ENCODE measurements at regions of chr5 and their contacts with region 1.

Region 1: GRCh38 chr5:53481887-53482716 is 1.7 kb downstream of the FST start:
- DNase-seq: peak; percentile 71
- ATAC-seq: peak; percentile 8
- H3K4me3 ChIP-seq: peak overlapping the region; percentile 100
- H3K27ac ChIP-seq: peak overlapping the region; percentile 99
- H3K4me1 ChIP-seq: peaks cover 15% of the 10 kb centered on the region
- H3K27me3 ChIP-seq: no peaks in the 10 kb centered on the region
- CTCF ChIP-seq: 0 out of 2 replicates have a peak, but pooled peaks have one; percentile 5
- POLR2A ChIP-seq: peak; percentile 69
- RAD21 ChIP-seq: peak; percentile 39; the same call in 1 of the 2 replicates

Region 2: GRCh38 chr5:52893105-52893504 is 589.0 kb before region 1 on chr5:
- CTCF ChIA-PET with region 1: no interaction called
- POLR2A ChIA-PET with region 1: no interaction called
- dilution Hi-C with region 1: no loop called
- in situ Hi-C with region 1: no loop called
- intact Hi-C with region 1: no loop called
- DNase-seq: peak; percentile 90
- ATAC-seq: peak; percentile 76
- H3K4me3 ChIP-seq: no peak overlapping the region
- H3K27ac ChIP-seq: no peak overlapping the region
- H3K4me1 ChIP-seq: peaks cover 9% of the 10 kb centered on the region
- H3K27me3 ChIP-seq: no peaks in the 10 kb centered on the region
- CTCF ChIP-seq: no peak
- POLR2A ChIP-seq: no peak
- RAD21 ChIP-seq: 0 out of 2 replicates have a peak, but pooled peaks have one; percentile 7

Region 3: DNA sequence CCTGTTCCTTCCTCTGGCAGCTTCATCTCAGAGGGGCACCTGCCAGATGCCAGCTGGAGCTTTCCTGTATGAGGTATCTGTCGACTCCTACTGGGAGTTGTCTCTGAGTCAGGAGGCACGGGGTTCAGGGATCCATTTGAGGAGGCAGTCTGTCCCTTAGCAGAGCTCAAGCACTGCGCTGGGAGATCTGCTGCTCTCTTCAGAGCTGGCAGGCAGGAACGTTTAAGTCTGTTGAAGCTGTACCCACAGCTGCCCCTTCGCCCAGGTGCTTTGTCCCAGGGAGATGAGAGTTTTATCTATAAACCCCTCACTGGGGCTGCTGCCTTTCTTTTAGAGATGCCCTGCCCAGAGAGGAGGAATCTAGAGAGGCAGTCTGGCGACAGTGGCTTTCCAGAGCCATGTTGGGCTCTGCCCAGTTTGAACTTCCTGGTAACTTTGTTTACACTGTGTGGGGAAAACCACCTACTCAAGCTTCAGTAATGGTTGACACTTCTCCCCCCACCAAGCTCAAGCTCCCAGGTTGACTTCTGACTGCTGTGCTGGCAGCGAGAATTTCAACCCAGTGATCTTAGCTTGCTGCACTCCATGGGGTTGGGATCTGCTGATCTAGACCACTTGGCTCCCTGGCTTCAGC is 504.7 kb before region 1 on chr5:
- CTCF ChIA-PET with region 1: no interaction called
- POLR2A ChIA-PET with region 1: no interaction called
- dilution Hi-C with region 1: no loop called
- in situ Hi-C with region 1: no loop called
- intact Hi-C with region 1: no loop called
- DNase-seq: no peak
- ATAC-seq: no peak
- H3K4me3 ChIP-seq: no peak overlapping the region
- H3K27ac ChIP-seq: no peak overlapping the region
- H3K4me1 ChIP-seq: no peaks in the 10 kb centered on the region
- H3K27me3 ChIP-seq: no peaks in the 10 kb centered on the region
- CTCF ChIP-seq: no peak
- POLR2A ChIP-seq: no peak
- RAD21 ChIP-seq: no peak

Region 4: GRCh38 chr5:53170748-53171349 is 311.3 kb before region 1 on chr5:
- CTCF ChIA-PET with region 1: no interaction called
- POLR2A ChIA-PET with region 1: no interaction called
- dilution Hi-C with region 1: no loop called
- in situ Hi-C with region 1: loop called (anchors 10 kb)
- intact Hi-C with region 1: loop called (anchors 2 kb)
- DNase-seq: peak; percentile 63
- ATAC-seq: peak; percentile 90
- H3K4me3 ChIP-seq: no peak overlapping the region
- H3K27ac ChIP-seq: no peak overlapping the region
- H3K4me1 ChIP-seq: peaks cover 4% of the 10 kb centered on the region
- H3K27me3 ChIP-seq: no peaks in the 10 kb centered on the region
- CTCF ChIP-seq: peak; percentile 73
- POLR2A ChIP-seq: no peak
- RAD21 ChIP-seq: peak; percentile 93

Region 5: DNA sequence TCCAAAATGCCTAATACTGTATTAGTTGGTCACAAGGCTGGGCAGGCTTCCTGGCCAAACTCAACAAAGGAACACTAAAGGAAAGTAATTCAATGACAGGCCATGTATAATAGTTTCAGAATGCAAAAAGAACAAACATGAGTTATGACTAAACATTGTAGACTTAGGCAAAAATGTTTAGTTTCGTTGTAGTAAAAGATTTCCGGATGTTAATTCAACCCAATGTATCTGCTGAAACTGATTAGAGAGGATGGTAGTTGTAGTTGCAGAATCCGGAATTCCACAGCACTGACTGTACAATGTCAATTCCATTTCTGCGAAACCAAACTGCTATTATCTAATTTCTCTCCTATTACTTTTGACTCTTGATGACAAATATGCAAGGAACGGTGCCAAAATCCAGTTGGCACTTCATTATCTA is 119.6 kb before region 1 on chr5:
- CTCF ChIA-PET with region 1: no interaction called
- POLR2A ChIA-PET with region 1: no interaction called
- dilution Hi-C with region 1: no loop called
- in situ Hi-C with region 1: no loop called
- intact Hi-C with region 1: loop called (anchors 5 kb)
- DNase-seq: peak; percentile 97
- ATAC-seq: peak; percentile 70
- H3K4me3 ChIP-seq: no peak overlapping the region
- H3K27ac ChIP-seq: peak overlapping the region; percentile 93
- H3K4me1 ChIP-seq: peaks cover 16% of the 10 kb centered on the region
- H3K27me3 ChIP-seq: no peaks in the 10 kb centered on the region
- CTCF ChIP-seq: no peak
- POLR2A ChIP-seq: no peak
- RAD21 ChIP-seq: no peak

Region 6: DNA sequence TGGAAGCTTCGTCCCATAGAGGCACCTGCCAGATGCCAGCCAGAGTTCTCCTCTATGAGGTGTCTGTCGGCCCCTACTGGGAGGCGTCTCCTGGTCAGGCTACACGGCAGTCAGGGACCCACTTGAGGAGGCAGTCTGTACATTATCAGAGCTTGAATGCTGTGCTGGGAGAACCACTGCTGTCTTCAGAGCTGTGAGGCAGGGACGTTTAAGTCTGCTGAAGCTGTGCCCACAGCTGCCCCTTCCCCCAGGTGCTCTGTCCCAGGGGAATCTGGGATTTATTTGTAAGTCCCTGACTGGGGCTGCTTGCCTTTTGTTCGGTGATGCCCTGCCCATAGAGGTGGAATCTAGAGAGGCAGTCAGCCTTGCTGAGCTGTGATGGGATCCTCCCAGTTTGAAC is 149.1 kb after region 1 on chr5:
- CTCF ChIA-PET with region 1: no interaction called
- POLR2A ChIA-PET with region 1: no interaction called
- dilution Hi-C with region 1: no loop called
- in situ Hi-C with region 1: no loop called
- intact Hi-C with region 1: no loop called
- DNase-seq: no peak
- ATAC-seq: no peak
- H3K4me3 ChIP-seq: no peak overlapping the region
- H3K27ac ChIP-seq: no peak overlapping the region
- H3K4me1 ChIP-seq: no peaks in the 10 kb centered on the region
- H3K27me3 ChIP-seq: no peaks in the 10 kb centered on the region
- CTCF ChIP-seq: no peak
- POLR2A ChIP-seq: no peak
- RAD21 ChIP-seq: no peak

Region 7: GRCh38 chr5:53917095-53917494 is 435.0 kb after region 1 on chr5:
- CTCF ChIA-PET with region 1: no interaction called
- POLR2A ChIA-PET with region 1: no interaction called
- dilution Hi-C with region 1: no loop called
- in situ Hi-C with region 1: no loop called
- intact Hi-C with region 1: loop called (anchors 10 kb)
- DNase-seq: peak; percentile 63
- ATAC-seq: peak; percentile 82
- H3K4me3 ChIP-seq: no peak overlapping the region
- H3K27ac ChIP-seq: no peak overlapping the region
- H3K4me1 ChIP-seq: peaks cover 4% of the 10 kb centered on the region; the same call in 1 of the 2 replicates
- H3K27me3 ChIP-seq: no peaks in the 10 kb centered on the region
- CTCF ChIP-seq: peak; percentile 40
- POLR2A ChIP-seq: no peak
- RAD21 ChIP-seq: no peak; the same call in 1 of the 2 replicates

Region 8: DNA sequence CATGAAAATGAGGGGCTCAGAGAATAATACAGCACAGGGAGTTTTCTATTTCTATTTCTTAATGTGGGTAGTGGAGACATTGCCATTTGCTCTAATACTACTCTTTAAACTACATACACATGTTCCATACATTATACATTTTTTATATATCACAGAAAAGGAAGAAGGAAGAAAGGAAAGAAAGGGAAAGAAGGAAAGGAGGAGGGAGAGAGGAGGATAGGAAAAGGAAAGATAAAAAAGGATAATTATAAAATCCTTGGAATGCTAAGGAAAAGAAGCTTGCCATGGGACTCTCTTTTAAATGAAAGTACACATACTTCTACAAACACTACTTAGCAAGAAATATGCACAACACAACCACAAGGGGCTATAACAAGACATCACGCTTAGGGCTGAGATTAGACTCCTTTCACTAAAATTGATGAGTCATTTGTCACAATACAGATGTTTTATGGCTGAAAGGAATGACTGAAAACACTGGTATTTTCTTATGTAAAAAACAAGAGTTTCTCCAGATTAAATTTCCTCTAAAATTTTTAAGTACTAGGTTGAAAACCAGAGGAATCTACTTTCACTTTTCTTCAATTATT is 608.5 kb after region 1 on chr5:
- CTCF ChIA-PET with region 1: no interaction called
- POLR2A ChIA-PET with region 1: no interaction called
- dilution Hi-C with region 1: no loop called
- in situ Hi-C with region 1: no loop called
- intact Hi-C with region 1: loop called (anchors 2 kb)
- DNase-seq: peak; percentile 85
- ATAC-seq: peak; percentile 66
- H3K4me3 ChIP-seq: 0 out of 2 replicates have a peak overlapping the region, but pooled peaks have one; percentile 1
- H3K27ac ChIP-seq: no peak overlapping the region
- H3K4me1 ChIP-seq: peaks cover 14% of the 10 kb centered on the region
- H3K27me3 ChIP-seq: no peaks in the 10 kb centered on the region
- CTCF ChIP-seq: peak; percentile 41
- POLR2A ChIP-seq: no peak
- RAD21 ChIP-seq: peak; percentile 28

Region 9: GRCh38 chr5:54229041-54229780 is 747.1 kb after region 1 on chr5:
- CTCF ChIA-PET with region 1: interaction called, 4 read pairs
- POLR2A ChIA-PET with region 1: no interaction called
- dilution Hi-C with region 1: no loop called
- in situ Hi-C with region 1: loop called (anchors 5 kb)
- intact Hi-C with region 1: no loop called
- DNase-seq: peak; percentile 58
- ATAC-seq: peak; percentile 92
- H3K4me3 ChIP-seq: no peak overlapping the region
- H3K27ac ChIP-seq: no peak overlapping the region
- H3K4me1 ChIP-seq: no peaks in the 10 kb centered on the region
- H3K27me3 ChIP-seq: no peaks in the 10 kb centered on the region; the same call in 1 of the 2 replicates
- CTCF ChIP-seq: peak; percentile 85
- POLR2A ChIP-seq: no peak
- RAD21 ChIP-seq: peak; percentile 74

Measured in IMR-90 (cell line).